SK-N-SH (cell line): ENCODE measurements at regions of chr20 and their contacts with region 1.

Region 1: GRCh38 chr20:51639206-51639832 is 96.8 kb upstream of the NFATC2 start:
- DNase-seq: peak; percentile 79
- H3K4me3 ChIP-seq: no peak overlapping the region; a peak in 1 of 4 replicates
- H3K27ac ChIP-seq: no peak overlapping the region
- H3K4me1 ChIP-seq: peaks cover 0 to 4% of the 10 kb centered on the region in 2 experiments; a peak in 2 of 4 replicates
- H3K27me3 ChIP-seq: no peaks in the 10 kb centered on the region
- CTCF ChIP-seq: peak; percentile 85
- EP300 ChIP-seq: no peak
- RAD21 ChIP-seq: peak; percentile 94

Region 2: DNA sequence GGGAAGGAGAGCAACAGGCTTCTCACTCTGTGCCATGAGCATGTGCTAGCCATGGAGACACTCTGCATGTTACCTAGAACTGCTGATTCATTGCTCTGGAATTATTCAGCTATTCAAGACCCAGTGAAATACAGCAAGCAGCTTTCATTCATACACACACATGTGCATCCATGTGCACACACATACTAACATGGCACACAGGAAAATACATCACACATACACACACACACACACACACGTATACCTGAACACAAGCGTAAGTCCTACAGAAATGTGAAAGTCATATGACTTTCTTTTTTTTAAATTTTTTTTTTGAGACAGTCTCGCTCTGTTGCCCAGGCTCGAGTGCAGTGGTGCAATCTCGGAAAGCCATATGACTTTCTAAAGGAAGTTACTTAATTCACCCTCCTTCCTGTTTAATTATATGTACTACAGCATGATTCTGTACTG is 11.4 kb after region 1 on chr20:
- CTCF ChIA-PET with region 1: interaction called, 11 read pairs
- POLR2A ChIA-PET with region 1: no interaction called
- DNase-seq: no peak
- H3K4me3 ChIP-seq: no peak overlapping the region
- H3K27ac ChIP-seq: no peak overlapping the region
- H3K4me1 ChIP-seq: peaks cover 0 to 13% of the 10 kb centered on the region in 2 experiments; a peak in 1 of 4 replicates
- H3K27me3 ChIP-seq: no peaks in the 10 kb centered on the region
- CTCF ChIP-seq: no peak
- EP300 ChIP-seq: no peak
- RAD21 ChIP-seq: no peak

Region 3: GRCh38 chr20:51687062-51687461 is 47.7 kb after region 1 on chr20:
- CTCF ChIA-PET with region 1: no interaction called
- POLR2A ChIA-PET with region 1: no interaction called
- DNase-seq: no peak
- H3K4me3 ChIP-seq: no peak overlapping the region
- H3K27ac ChIP-seq: peak overlapping the region in 1 of 2 experiments; percentile 45; a peak in 2 of 4 replicates
- H3K4me1 ChIP-seq: peaks cover 0 to 6% of the 10 kb centered on the region in 2 experiments; a peak in 1 of 4 replicates
- H3K27me3 ChIP-seq: no peaks in the 10 kb centered on the region
- CTCF ChIP-seq: no peak
- EP300 ChIP-seq: no peak
- RAD21 ChIP-seq: no peak

Region 4: DNA sequence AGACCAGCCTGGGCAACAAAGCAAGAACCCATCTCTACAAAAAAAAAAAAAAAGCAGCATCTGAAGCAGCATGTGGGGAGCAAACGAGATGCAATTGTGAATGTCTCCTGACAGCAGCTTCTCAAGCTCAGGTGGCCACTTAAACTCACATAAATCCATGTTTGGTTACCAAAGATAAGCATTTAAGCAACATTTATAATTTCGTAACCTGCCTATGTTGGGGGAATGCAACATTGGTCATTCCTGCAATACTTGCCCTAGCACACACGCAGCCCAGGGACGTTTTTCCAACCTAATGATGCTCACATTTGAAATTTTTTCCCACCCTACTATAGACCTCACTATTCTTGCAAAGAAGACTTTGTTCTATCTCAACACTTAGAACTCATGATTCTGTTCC is 439.0 kb after region 1 on chr20:
- CTCF ChIA-PET with region 1: interaction called, 30 read pairs
- POLR2A ChIA-PET with region 1: no interaction called
- DNase-seq: no peak
- H3K4me3 ChIP-seq: no peak overlapping the region
- H3K27ac ChIP-seq: no peak overlapping the region
- H3K4me1 ChIP-seq: peaks cover 0 to 7% of the 10 kb centered on the region in 2 experiments; a peak in 1 of 4 replicates
- H3K27me3 ChIP-seq: no peaks in the 10 kb centered on the region
- CTCF ChIP-seq: no peak
- EP300 ChIP-seq: no peak
- RAD21 ChIP-seq: no peak

Region 5: GRCh38 chr20:52083627-52084232 is 444.4 kb after region 1 on chr20:
- CTCF ChIA-PET with region 1: interaction called, 30 read pairs
- POLR2A ChIA-PET with region 1: no interaction called
- DNase-seq: peak; percentile 80
- H3K4me3 ChIP-seq: no peak overlapping the region; a peak in 1 of 4 replicates
- H3K27ac ChIP-seq: no peak overlapping the region
- H3K4me1 ChIP-seq: no peaks in the 10 kb centered on the region; a peak in 1 of 4 replicates
- H3K27me3 ChIP-seq: no peaks in the 10 kb centered on the region
- CTCF ChIP-seq: peak; percentile 82
- EP300 ChIP-seq: 0 out of 4 replicates have a peak, but pooled peaks of 1 of the 2 experiments have one; percentile 12
- RAD21 ChIP-seq: peak; percentile 99